ENCODE measurements at regions of chr4 and their contacts with region 1.

Region 1: GRCh38 chr4:20773144-20773997 is 73.1 kb downstream of the PACRGL start:
- DNase-seq: peak; percentile 59
- H3K4me3 Mint-ChIP-seq: no peak overlapping the region
- H3K27ac Mint-ChIP-seq: no peak overlapping the region
- H3K4me1 Mint-ChIP-seq: no peaks in the 10 kb centered on the region
- H3K27me3 Mint-ChIP-seq: no peaks in the 10 kb centered on the region
- CTCF ChIP-seq: peak; percentile 45

Region 2: GRCh38 chr4:21134994-21135393 is 361.6 kb after region 1 on chr4:
- CTCF ChIA-PET with region 1: interaction called, 4 read pairs
- intact Hi-C with region 1: loop called (anchors 1 kb)
- DNase-seq: no peak
- H3K4me3 Mint-ChIP-seq: no peak overlapping the region
- H3K27ac Mint-ChIP-seq: no peak overlapping the region
- H3K4me1 Mint-ChIP-seq: no peaks in the 10 kb centered on the region
- H3K27me3 Mint-ChIP-seq: no peaks in the 10 kb centered on the region
- CTCF ChIP-seq: no peak